Panc1 (cell line): ENCODE measurements at regions of chr12 and their contacts with region 1.

Region 1: GRCh38 chr12:42296503-42297109 is 29.3 kb downstream of the ZCRB1 start:
- DNase-seq: no peak
- ATAC-seq: no peak
- H3K4me3 ChIP-seq: no peak overlapping the region
- H3K27ac ChIP-seq: no peak overlapping the region
- H3K4me1 ChIP-seq: no peaks in the 10 kb centered on the region
- H3K27me3 ChIP-seq: no peaks in the 10 kb centered on the region
- CTCF ChIP-seq: peak; percentile 80

Region 2: DNA sequence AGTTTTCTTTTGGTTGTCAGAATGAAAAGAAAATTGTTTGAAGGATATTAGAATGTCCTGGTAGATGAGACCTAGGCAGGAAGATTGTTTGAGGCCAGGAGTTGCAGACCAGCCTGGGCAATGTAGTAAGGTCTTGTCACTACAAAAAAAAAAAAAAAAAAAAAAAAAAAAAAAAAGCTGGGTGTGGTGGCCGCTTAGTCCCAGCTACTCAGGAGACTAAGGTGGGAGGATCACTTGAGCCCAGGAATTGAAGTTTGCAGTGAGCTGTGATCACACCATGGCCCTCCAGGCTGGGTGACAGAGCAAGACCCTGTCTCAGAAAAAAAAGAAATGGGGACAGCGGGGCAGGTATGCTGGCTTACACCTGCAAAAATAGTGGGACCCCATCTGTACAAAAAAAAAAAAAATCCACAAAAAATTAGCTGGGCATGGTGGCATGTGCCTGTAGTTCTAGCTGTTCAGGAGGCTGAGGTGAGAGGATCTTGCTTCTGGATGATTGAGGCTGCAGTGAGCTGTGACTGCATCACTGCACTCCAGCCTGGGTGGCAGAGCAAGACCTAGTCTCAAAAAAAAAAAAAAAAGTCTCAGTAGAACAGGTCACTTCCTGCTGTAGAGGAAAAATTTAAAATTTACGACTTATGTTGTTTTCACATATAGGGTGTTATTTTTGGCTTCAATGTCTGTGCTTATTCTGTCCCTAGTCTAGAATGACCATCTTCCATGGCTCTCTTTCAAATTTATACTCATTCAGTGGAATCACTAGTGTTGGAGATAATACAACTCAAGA is 100.1 kb after region 1 on chr12:
- CTCF ChIA-PET with region 1: interaction called, 15 read pairs
- POLR2A ChIA-PET with region 1: no interaction called
- in situ Hi-C with region 1: no loop called
- intact Hi-C with region 1: no loop called
- DNase-seq: no peak
- ATAC-seq: no peak
- H3K4me3 ChIP-seq: no peak overlapping the region
- H3K27ac ChIP-seq: no peak overlapping the region
- H3K4me1 ChIP-seq: no peaks in the 10 kb centered on the region
- H3K27me3 ChIP-seq: no peaks in the 10 kb centered on the region
- CTCF ChIP-seq: no peak